H1 (cell line): ENCODE measurements at regions of chr3 and their contacts with region 1.

Region 1: DNA sequence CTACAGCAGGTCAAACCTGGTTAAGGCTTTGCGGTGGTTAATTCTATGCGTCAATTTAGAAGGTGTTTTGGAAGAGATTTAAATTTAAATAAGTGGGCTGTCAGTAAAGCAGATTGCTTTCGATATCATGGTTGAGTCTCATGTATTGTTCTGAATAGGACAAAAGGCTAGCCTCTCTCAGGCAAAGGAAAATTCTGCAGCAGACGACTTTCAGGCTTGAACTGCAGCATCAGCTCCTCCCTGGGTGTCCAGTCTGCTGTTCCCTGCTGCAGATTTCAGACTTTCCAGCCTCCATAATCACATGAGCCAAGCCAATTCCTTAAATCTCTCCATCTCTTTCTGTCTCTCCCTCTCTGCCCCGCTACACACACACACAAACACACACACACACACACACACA is 143.2 kb downstream of the TUSC7 start:
- DNase-seq: no peak
- H3K4me3 ChIP-seq: no peak overlapping the region
- H3K27ac ChIP-seq: no peak overlapping the region
- H3K4me1 ChIP-seq: peaks cover 0 to 9% (median 6%) of the 10 kb centered on the region in 4 experiments; a peak in 4 of 7 replicates
- H3K27me3 ChIP-seq: peaks cover 0 to 1% (median 0%) of the 10 kb centered on the region in 4 experiments; a peak in 1 of 7 replicates
- CTCF ChIP-seq: no peak
- EP300 ChIP-seq: no peak
- POLR2A ChIP-seq: no peak
- RAD21 ChIP-seq: no peak

Region 2: GRCh38 chr3:116863822-116864589 is 11.2 kb after region 1 on chr3:
- CTCF ChIA-PET with region 1: interaction called, 16 read pairs
- POLR2A ChIA-PET with region 1: no interaction called
- DNase-seq: peak; percentile 34 to 60
- H3K4me3 ChIP-seq: peak overlapping the region; percentile 20 to 56 (median 39); a peak in 7 of 8 replicates
- H3K27ac ChIP-seq: no peak overlapping the region; the same call in 1 of the 2 replicates
- H3K4me1 ChIP-seq: peaks cover 7 to 13% (median 9%) of the 10 kb centered on the region in 4 experiments; a peak in 5 of 7 replicates
- H3K27me3 ChIP-seq: no peaks in the 10 kb centered on the region
- CTCF ChIP-seq: peak in 2 of 3 experiments; percentile 60; a peak in 3 of 4 replicates
- EP300 ChIP-seq: no peak
- POLR2A ChIP-seq: 0 out of 3 replicates have a peak, but pooled peaks of 1 of the 2 experiments have one; percentile 42
- RAD21 ChIP-seq: peak; percentile 91 to 92

Region 3: DNA sequence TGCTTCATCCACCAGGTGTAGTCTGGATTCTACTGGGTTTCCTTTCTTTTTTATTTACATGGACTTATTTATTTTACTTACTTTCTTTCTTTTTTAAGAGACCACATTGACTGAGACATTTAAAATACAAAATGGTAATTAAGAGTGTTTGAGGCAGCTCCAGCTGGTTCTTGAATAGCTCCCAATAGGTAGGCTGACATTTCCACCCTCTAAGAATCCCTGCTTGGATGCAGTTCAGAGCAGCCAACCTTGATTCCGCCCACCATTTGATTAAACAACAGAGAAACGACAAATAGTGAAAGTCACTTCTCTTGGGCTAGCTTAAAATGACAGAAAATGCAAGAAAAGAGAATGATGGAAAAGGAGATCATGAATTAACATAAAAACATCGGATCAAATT is 127.3 kb after region 1 on chr3:
- CTCF ChIA-PET with region 1: no interaction called
- POLR2A ChIA-PET with region 1: no interaction called
- DNase-seq: no peak
- H3K4me3 ChIP-seq: no peak overlapping the region
- H3K27ac ChIP-seq: no peak overlapping the region
- H3K4me1 ChIP-seq: peaks cover 0 to 2% (median 0%) of the 10 kb centered on the region in 4 experiments; a peak in 1 of 7 replicates
- H3K27me3 ChIP-seq: no peaks in the 10 kb centered on the region
- CTCF ChIP-seq: no peak
- EP300 ChIP-seq: no peak
- POLR2A ChIP-seq: no peak
- RAD21 ChIP-seq: no peak